SK-N-SH (cell line): ENCODE measurements at regions of chr17 and their contacts with region 1.

Region 1: DNA sequence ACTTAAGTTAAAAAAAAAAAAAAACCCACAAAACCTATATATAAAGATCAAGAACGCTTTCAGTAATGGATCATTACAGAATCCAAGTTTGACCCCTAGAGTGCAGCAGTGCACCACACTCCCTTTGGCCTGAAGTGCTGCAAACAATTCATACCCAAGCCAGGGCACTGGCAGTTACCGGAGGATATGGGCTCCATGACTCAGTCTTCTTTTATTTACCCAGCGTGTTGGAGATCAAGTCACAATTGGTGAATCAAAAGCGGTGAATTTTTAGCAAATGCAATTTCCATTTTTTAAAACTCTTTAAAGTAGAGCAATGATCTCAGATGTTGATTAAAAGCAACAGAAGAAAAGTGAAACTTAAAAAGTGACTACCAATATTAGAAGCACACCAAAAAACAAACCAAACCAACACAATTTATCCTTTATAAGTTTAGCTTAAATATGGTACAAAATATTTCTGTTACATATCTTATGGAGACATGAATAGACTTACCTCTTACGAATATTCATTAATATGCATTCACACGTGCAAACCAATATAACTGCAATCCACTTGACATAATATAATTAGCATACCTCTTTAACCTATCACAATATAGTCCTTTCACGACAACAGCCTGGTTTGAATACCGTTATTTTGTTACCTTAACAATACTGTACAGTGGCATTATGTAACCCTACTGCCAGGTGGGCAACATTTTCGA is 46.3 kb downstream of the ZNF652 start:
- DNase-seq: peak; percentile 77
- H3K4me3 ChIP-seq: peak overlapping the region in 1 of 2 experiments; percentile 9; a peak in 1 of 4 replicates
- H3K27ac ChIP-seq: peak overlapping the region; percentile 11 to 59; a peak in 3 of 4 replicates
- H3K4me1 ChIP-seq: peaks cover 0 to 8% of the 10 kb centered on the region in 2 experiments
- H3K27me3 ChIP-seq: no peaks in the 10 kb centered on the region
- CTCF ChIP-seq: peak; percentile 100
- EP300 ChIP-seq: peak in 1 of 2 experiments; percentile 32; a peak in 1 of 4 replicates
- RAD21 ChIP-seq: peak; percentile 100

Region 2: GRCh38 chr17:49297141-49297540 is 18.6 kb before region 1 on chr17:
- CTCF ChIA-PET with region 1: interaction called, 24 read pairs
- POLR2A ChIA-PET with region 1: no interaction called
- DNase-seq: no peak
- H3K4me3 ChIP-seq: no peak overlapping the region
- H3K27ac ChIP-seq: no peak overlapping the region
- H3K4me1 ChIP-seq: no peaks in the 10 kb centered on the region
- H3K27me3 ChIP-seq: no peaks in the 10 kb centered on the region
- CTCF ChIP-seq: no peak
- EP300 ChIP-seq: no peak
- RAD21 ChIP-seq: no peak

Region 3: DNA sequence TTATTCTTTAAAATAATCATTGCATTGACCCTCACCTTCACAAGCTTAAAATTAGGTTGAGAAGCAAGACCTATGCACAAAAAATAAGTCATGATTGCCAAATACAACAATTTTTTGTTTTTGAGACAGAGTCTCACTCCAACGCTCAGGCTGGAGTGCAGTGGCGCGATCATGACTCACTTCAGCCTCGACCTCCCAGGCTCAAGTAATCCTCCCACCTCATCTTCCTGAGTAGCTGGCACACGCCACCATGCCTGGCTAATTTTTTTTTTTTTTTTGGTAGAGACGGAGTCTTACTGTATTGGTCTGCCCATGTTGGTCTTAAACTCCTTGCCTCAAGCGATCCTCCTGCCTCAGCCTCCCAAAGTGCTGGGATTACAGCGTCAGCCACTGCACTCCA is 22.2 kb after region 1 on chr17:
- CTCF ChIA-PET with region 1: interaction called, 24 read pairs
- POLR2A ChIA-PET with region 1: no interaction called
- DNase-seq: no peak
- H3K4me3 ChIP-seq: no peak overlapping the region
- H3K27ac ChIP-seq: peak overlapping the region in 1 of 2 experiments; percentile 46; a peak in 2 of 4 replicates
- H3K4me1 ChIP-seq: peaks cover 0 to 26% of the 10 kb centered on the region in 2 experiments; a peak in 3 of 4 replicates
- H3K27me3 ChIP-seq: no peaks in the 10 kb centered on the region
- CTCF ChIP-seq: no peak
- EP300 ChIP-seq: no peak
- RAD21 ChIP-seq: no peak

Region 4: DNA sequence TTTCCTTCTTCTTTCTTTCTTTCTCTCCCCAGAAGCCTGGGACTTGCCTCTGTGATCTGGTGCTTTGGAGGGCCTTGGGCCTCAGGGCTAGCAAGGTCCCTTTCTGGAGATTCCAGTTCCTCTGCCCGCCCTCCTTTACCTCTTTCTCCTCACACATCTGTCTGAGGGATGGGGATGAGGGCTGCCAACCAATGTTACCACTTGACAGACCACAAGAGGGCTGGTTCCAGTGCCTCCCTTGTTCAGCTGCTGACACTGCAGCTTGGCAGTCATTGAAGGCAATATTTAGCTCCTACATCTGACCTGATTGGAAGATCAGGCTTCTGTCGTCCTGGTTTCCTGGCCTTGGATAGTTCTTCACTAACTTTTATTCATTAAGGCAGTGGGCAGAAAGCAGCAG is 50.0 kb after region 1 on chr17:
- CTCF ChIA-PET with region 1: interaction called, 12 read pairs
- POLR2A ChIA-PET with region 1: no interaction called
- DNase-seq: peak; percentile 57
- H3K4me3 ChIP-seq: no peak overlapping the region
- H3K27ac ChIP-seq: no peak overlapping the region
- H3K4me1 ChIP-seq: peaks cover 0 to 6% of the 10 kb centered on the region in 2 experiments; a peak in 1 of 4 replicates
- H3K27me3 ChIP-seq: no peaks in the 10 kb centered on the region
- CTCF ChIP-seq: peak; percentile 37; the same call in 1 of the 2 replicates
- EP300 ChIP-seq: no peak
- RAD21 ChIP-seq: peak; percentile 36; the same call in 1 of the 2 replicates

Region 5: GRCh38 chr17:49390548-49391324 is 75.0 kb after region 1 on chr17:
- CTCF ChIA-PET with region 1: interaction called, 154 read pairs
- POLR2A ChIA-PET with region 1: interaction called, 5 read pairs
- DNase-seq: no peak
- H3K4me3 ChIP-seq: no peak overlapping the region
- H3K27ac ChIP-seq: no peak overlapping the region
- H3K4me1 ChIP-seq: no peaks in the 10 kb centered on the region; a peak in 1 of 4 replicates
- H3K27me3 ChIP-seq: no peaks in the 10 kb centered on the region
- CTCF ChIP-seq: no peak
- EP300 ChIP-seq: no peak
- RAD21 ChIP-seq: no peak

Region 6: DNA sequence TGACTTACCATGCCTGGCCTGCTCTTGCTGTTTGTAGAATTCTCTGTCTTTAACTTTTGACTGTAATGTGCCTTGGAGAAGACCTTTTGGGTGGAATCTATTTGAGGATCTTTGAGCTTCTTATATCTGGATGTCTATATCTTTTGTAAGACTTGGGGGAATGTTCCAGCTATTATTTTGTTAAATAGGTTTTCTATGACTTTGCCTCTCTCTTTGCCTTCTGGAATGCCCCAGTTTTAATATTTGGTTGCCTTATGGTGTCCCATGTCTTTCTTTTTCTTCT is 109.2 kb after region 1 on chr17:
- CTCF ChIA-PET with region 1: no interaction called
- POLR2A ChIA-PET with region 1: no interaction called
- DNase-seq: no peak
- H3K4me3 ChIP-seq: peak overlapping the region in 1 of 2 experiments; percentile 5; a peak in 1 of 4 replicates
- H3K27ac ChIP-seq: peak overlapping the region in 1 of 2 experiments; percentile 35; a peak in 2 of 4 replicates
- H3K4me1 ChIP-seq: no peaks in the 10 kb centered on the region
- H3K27me3 ChIP-seq: peaks cover 15% of the 10 kb centered on the region; the same call in 1 of the 2 replicates
- CTCF ChIP-seq: no peak
- EP300 ChIP-seq: no peak
- RAD21 ChIP-seq: no peak